Activated CD8-positive, alpha-beta memory T cell treated with anti-CD3 and anti-CD28 coated beads, Interleukin-2, amount 10 ng/mL, durations not matched to agents 7 days and 5 days (primary cell): ENCODE measurements at regions of chr15 and their contacts with region 1.

Region 1: DNA sequence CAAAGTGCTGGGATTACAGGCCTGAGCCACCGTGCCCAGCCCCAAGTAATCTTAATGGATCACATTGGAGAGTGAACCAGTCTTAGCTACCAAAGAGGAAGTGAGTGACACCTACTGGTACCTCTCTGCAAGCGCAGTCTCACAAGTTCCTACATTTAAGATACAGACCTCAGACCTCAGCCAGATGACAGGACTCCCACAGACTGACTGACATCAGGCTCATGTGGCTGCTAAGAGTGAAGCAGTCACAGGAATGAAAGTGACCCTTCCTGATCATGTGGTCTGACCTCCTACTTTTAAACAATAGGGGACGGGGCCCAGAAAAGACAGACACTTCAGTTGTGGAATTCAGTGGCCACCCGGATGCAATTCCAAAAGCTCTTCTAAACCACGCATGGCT is 36.3 kb upstream of the GNB5 start:
- DNase-seq: peak; percentile 90
- ATAC-seq: peak; percentile 98
- H3K4me3 Mint-ChIP-seq: no peak overlapping the region
- H3K27ac Mint-ChIP-seq: peak overlapping the region; percentile 40
- H3K4me1 Mint-ChIP-seq: peaks cover 19% of the 10 kb centered on the region
- H3K27me3 Mint-ChIP-seq: no peaks in the 10 kb centered on the region

Region 2: DNA sequence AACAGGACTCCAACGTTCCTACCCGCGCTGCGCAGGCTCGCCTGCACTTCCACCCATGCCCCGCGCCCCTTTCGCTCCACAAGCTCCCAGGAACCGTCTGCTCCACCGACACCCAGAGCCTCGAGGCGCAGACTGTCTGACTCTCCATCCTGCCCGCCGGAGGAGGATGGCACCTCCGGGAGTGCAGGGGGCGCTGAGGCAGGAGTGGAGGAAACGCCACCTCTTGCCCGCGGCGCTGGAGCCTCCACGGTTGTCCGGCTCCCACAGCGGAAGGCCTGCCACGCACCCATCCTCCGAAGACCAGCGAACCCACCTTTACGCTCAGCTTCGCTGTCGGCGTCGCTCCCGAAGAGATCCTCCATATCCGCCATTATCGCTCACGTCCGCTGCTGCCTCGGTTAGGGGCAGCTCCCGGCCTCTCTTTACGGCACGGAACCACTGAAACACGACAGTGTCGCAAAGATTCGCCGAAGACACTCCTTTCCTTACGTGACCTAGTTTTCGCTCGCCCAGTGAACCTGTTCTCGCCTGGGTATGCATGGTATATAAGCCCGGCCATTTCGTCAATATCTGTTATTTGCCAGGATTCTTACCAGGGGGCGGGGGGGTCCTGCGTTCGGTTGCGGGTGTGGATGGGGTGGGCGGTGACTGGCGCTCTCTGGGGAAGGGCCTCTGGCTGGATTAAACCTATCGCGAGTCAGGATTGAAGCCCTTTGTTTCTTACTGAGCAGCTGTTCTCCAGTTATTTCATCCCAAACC is 255.9 kb before region 1 on chr15 and contains the start of gene LEO1:
- CTCF ChIA-PET with region 1: interaction called, 10 read pairs
- DNase-seq: peak; percentile 96
- ATAC-seq: peak; percentile 94
- H3K4me3 Mint-ChIP-seq: peak within 1 kb of the TSS; percentile 95
- H3K27ac Mint-ChIP-seq: peak within 1 kb of the TSS; percentile 91
- H3K4me1 Mint-ChIP-seq: peaks cover 29% of the 10 kb centered on the region
- H3K27me3 Mint-ChIP-seq: no peaks in the 10 kb centered on the region
- total RNA-seq, gene LEO1: 33.4 to 34.9 TPM

Region 3: GRCh38 chr15:52179278-52180195 is 47.9 kb before region 1 on chr15:
- CTCF ChIA-PET with region 1: interaction called, 14 read pairs
- DNase-seq: peak; percentile 94
- ATAC-seq: peak; percentile 88
- H3K4me3 Mint-ChIP-seq: peak overlapping the region; percentile 82
- H3K27ac Mint-ChIP-seq: peak overlapping the region; percentile 96
- H3K4me1 Mint-ChIP-seq: peaks cover 36% of the 10 kb centered on the region
- H3K27me3 Mint-ChIP-seq: no peaks in the 10 kb centered on the region

Region 4: GRCh38 chr15:52217186-52217585 is 10.3 kb before region 1 on chr15:
- CTCF ChIA-PET with region 1: interaction called, 29 read pairs
- DNase-seq: no peak
- ATAC-seq: no peak
- H3K4me3 Mint-ChIP-seq: no peak overlapping the region
- H3K27ac Mint-ChIP-seq: no peak overlapping the region
- H3K4me1 Mint-ChIP-seq: peaks cover 28% of the 10 kb centered on the region
- H3K27me3 Mint-ChIP-seq: no peaks in the 10 kb centered on the region